ENCODE measurements at regions of chr5 and their contacts with region 1.

Region 1: GRCh38 chr5:124661317-124662141 is 84.9 kb downstream of the ZNF608 start:
- DNase-seq: peak; percentile 99
- ATAC-seq: peak; percentile 92
- H3K4me3 ChIP-seq: peak overlapping the region; percentile 5 to 47 (median 12); a peak in 2 of 6 replicates
- H3K27ac ChIP-seq: peak overlapping the region; percentile 61
- H3K4me1 ChIP-seq: peaks cover 78% of the 10 kb centered on the region
- H3K27me3 ChIP-seq: no peaks in the 10 kb centered on the region
- CTCF ChIP-seq: no peak
- EP300 ChIP-seq: peak; percentile 62 to 94; a peak in 3 of 4 replicates
- POLR2A ChIP-seq: no peak
- RAD21 ChIP-seq: 0 out of 2 replicates have a peak, but pooled peaks have one; percentile 10

Region 2: GRCh38 chr5:124524552-124525232 is 136.8 kb before region 1 on chr5:
- CTCF ChIA-PET with region 1: no interaction called
- POLR2A ChIA-PET with region 1: no interaction called
- in situ Hi-C with region 1: no loop called
- intact Hi-C with region 1: loop called (anchors 1 kb)
- DNase-seq: peak; percentile 31
- ATAC-seq: peak; percentile 77
- H3K4me3 ChIP-seq: no peak overlapping the region
- H3K27ac ChIP-seq: no peak overlapping the region
- H3K4me1 ChIP-seq: peaks cover 30% of the 10 kb centered on the region
- H3K27me3 ChIP-seq: peaks cover 0 to 3% of the 10 kb centered on the region in 2 experiments; a peak in 1 of 5 replicates
- CTCF ChIP-seq: peak; percentile 58
- EP300 ChIP-seq: no peak
- POLR2A ChIP-seq: no peak
- RAD21 ChIP-seq: peak; percentile 44; the same call in 1 of the 2 replicates

Region 3: DNA sequence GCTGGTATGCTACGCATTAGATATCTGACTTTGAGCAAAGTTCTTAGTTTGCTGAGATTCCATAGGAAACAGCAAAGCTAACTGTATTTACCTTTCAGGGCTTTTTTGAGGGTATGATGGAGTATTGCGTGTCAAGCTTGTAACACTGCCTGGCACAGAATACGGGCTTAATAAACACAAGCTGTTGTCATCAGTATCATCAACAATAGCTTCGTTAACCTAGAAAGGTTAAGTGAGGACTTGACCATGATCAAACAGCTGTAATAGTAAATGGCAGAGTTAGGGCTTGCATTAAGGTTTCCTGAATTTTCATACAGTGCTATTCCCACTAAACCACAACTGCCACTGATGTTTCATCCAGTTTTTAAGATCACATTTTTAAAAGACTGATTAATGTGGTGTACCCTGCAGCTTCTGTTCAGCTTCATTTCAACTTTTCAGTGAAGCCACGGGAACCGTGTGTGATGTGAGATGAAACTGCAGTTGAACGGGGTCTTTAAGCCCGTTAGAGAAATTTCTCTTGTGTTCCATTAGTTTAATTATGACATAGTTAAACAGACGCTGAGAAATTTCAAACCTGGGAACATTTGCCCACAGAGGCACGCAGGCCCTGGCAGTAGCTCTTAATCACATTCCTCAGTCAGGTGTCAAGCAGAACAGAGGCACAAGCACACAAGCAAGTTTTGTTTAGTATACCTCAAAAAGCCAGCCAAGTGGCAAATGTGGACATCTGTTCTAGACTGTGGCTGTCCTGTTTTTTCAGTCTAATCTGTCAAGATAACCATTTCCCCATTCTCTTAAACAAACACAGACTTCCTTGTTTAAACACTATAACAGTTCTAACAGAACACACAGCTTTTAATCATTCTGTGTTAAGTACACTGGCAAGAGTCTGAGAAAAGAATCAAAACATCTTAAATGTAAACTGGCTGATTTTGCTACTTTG is 62.2 kb before region 1 on chr5:
- CTCF ChIA-PET with region 1: no interaction called
- POLR2A ChIA-PET with region 1: interaction called, 8 read pairs
- in situ Hi-C with region 1: no loop called
- intact Hi-C with region 1: loop called (anchors 1 kb)
- DNase-seq: peak; percentile 96
- ATAC-seq: peak; percentile 94
- H3K4me3 ChIP-seq: peak overlapping the region in 2 of 3 experiments; percentile 9 to 29; a peak in 3 of 6 replicates
- H3K27ac ChIP-seq: peak overlapping the region; percentile 59
- H3K4me1 ChIP-seq: peaks cover 57% of the 10 kb centered on the region
- H3K27me3 ChIP-seq: no peaks in the 10 kb centered on the region
- CTCF ChIP-seq: no peak
- EP300 ChIP-seq: peak; percentile 65 to 95; a peak in 3 of 4 replicates
- POLR2A ChIP-seq: no peak
- RAD21 ChIP-seq: peak; percentile 29; the same call in 1 of the 2 replicates

Region 4: DNA sequence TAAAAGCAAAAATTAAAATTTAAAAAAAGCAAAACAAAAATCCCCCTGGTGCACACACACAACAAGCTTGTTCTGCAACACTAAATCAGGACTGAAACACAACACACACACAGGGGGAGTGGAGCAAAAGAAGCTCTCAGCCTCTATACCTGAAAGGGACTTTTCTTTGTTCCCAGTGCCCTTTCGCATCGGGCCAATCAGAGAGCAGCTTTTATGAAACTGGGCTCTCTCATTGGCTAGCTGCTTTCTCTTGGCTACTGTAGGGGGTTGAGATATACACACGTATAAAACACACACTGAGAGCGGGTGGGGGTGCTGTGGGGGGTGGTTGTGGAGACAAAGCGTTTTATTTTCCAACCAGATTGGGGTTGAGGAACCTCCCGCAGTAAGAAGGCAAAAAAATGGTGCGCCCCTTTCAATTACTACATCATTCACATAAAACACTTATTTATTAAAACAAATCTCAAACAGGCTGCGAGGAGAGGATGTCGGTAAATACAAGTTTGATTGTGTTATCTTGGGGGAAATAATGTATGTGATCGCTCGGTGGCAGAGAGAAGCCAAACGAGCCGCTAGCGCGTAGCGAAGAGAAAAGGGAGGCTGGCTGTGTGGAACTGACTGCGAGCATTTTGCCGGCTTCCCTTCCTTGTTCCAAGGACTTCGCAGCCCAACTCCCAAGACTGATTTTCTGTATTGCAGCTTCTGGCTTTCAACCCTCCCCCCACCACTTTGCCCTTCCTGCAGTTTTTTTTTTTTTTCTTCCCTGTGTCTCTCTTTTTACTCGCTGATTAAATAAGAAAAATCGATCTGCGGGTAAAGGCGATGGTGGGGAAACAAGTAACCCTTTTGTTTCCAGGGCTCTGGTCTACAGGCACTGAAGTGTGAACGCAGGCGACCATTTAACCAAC is 87.4 kb after region 1 on chr5:
- CTCF ChIA-PET with region 1: interaction called, 3 read pairs
- POLR2A ChIA-PET with region 1: interaction called, 15 read pairs
- in situ Hi-C with region 1: no loop called
- intact Hi-C with region 1: loop called (anchors 2 kb)
- DNase-seq: peak; percentile 81
- ATAC-seq: peak; percentile 93
- H3K4me3 ChIP-seq: peak overlapping the region; percentile 49 to 73 (median 68)
- H3K27ac ChIP-seq: peak overlapping the region; percentile 71
- H3K4me1 ChIP-seq: peaks cover 29% of the 10 kb centered on the region
- H3K27me3 ChIP-seq: peaks cover 0 to 27% of the 10 kb centered on the region in 2 experiments; a peak in 3 of 5 replicates
- CTCF ChIP-seq: no peak
- EP300 ChIP-seq: peak in 1 of 2 experiments; percentile 87; a peak in 2 of 4 replicates
- POLR2A ChIP-seq: peak in 1 of 2 experiments; percentile 11; a peak in 1 of 4 replicates
- RAD21 ChIP-seq: no peak

Region 5: DNA sequence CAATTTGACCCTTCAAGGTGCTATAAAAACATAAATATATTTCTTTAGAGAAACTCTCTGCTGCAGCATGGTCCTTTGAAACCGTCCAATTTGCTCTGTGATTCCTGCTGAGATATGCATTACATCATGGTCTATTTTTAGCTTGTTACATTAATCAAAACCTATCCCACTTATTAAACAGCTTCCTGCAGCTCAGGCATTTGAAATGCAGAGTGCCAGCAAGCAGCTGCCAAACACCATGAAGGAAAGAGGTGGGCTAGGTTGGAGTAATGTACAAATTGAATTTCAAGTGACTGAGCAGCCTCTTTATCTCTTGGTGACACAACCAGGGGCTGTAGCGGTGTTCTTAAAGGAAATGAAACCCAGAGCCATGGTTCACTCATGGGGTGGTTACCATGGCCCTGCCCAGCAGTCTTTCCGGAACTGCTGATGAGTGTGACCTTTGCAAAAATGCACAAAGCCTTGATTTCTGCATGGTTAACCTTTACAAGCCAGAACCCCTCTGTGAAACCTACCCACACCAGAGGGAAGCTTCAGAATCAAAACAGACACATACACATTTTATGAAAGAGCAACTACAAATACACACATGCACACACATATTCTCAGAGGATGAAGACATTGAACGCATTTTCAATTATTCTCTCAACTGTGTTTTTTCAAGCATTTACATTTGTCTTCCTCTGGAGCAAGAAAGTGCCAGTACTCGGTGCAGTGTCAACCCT is 240.7 kb after region 1 on chr5:
- CTCF ChIA-PET with region 1: no interaction called
- POLR2A ChIA-PET with region 1: no interaction called
- in situ Hi-C with region 1: no loop called
- intact Hi-C with region 1: loop called (anchors 10 kb)
- DNase-seq: no peak
- ATAC-seq: no peak
- H3K4me3 ChIP-seq: no peak overlapping the region
- H3K27ac ChIP-seq: no peak overlapping the region
- H3K4me1 ChIP-seq: peaks cover 17% of the 10 kb centered on the region
- H3K27me3 ChIP-seq: no peaks in the 10 kb centered on the region
- CTCF ChIP-seq: no peak
- EP300 ChIP-seq: no peak
- POLR2A ChIP-seq: no peak
- RAD21 ChIP-seq: no peak